Uterus (tissue), 4 donors: ENCODE measurements at regions of chr3 and their contacts with region 1.

Region 1: DNA sequence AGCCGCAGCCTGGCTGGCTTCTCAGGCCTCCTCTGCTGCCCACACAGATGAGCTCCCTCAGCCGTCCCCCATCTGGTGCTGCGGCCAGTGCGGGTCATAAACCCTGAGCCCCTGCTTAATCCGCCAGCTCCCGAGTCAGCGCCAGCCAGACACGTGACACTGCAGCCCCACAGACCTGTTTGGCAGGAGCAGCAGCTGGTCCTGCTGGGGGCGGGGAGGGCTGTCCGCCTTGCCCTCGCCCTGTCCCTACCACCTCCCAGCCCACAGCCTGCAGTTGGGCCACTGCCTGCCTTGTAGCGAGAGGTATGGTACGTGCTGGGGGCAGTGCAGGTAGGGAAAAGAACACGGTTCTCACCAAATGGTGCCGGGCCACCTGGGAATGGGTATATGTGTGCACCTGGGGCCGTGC is 86.2 kb downstream of the IQSEC1 start:
- DNase-seq: no peak
- H3K4me3 ChIP-seq: no peak overlapping the region
- H3K27ac ChIP-seq: no peak overlapping the region
- H3K4me1 ChIP-seq: no peaks in the 10 kb centered on the region
- H3K27me3 ChIP-seq: no peaks in the 10 kb centered on the region
- CTCF ChIP-seq: no peak
- POLR2A ChIP-seq: no peak

Region 2: DNA sequence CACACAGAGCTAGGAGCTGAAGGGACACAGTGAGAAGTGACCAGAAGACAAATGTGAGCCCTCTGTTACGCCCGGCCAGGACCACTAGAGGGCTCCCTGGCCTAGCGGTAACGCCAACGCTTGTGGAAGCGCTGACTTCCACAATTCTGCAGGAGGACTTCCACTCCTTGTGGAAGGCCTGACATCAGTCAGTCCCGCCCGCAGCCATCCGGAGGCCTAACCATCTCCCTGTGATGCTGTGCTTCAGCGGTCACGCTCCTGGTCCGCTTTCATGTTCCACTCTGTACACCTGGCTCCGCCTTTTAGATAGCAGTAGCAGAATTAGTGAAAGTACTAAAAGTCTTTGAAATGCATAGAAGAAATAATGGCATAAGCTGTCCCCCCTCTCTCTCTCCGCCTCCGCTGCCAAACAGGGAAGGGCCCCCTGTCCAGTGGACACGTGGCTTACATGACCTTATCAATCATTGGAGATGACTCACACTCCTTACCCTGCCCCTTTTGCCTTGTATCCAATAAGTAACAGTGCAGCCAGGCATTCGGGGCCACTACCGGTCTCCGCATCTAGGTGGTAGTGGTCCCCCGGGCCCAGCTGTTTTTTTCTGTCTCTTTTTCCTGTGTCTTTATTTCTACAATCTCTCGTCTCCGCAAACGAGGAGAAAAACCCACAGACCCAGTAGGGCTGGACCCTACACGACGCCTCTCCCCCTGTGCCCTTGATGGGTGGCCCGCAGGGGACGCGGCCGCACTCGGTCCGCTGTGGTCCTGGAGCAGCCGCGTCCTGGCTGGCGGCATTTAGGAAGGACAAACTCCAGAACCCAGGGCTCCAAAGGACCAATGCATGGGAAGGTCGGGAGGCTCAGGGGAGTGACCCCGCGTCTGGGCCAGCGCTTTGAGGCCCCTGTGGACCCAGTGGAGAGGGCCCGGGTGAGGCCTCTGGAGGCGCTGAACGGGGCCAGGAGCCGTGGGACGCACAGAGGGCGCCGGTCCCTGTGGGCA is 118.7 kb before region 1 on chr3:
- intact Hi-C with region 1: loop called (anchors 5 kb)
- DNase-seq: peak; percentile 77 to 82
- H3K4me3 ChIP-seq: no peak overlapping the region
- H3K27ac ChIP-seq: no peak overlapping the region
- H3K4me1 ChIP-seq: peaks cover 0 to 6% of the 10 kb centered on the region in 2 donors
- H3K27me3 ChIP-seq: no peaks in the 10 kb centered on the region
- CTCF ChIP-seq: peak; percentile 93 to 96 (median 95)
- POLR2A ChIP-seq: no peak

Region 3: GRCh38 chr3:13673209-13673608 is 686.2 kb after region 1 on chr3:
- intact Hi-C with region 1: no loop called
- DNase-seq: no peak
- H3K4me3 ChIP-seq: no peak overlapping the region
- H3K27ac ChIP-seq: no peak overlapping the region
- H3K4me1 ChIP-seq: no peaks in the 10 kb centered on the region
- H3K27me3 ChIP-seq: no peaks in the 10 kb centered on the region
- CTCF ChIP-seq: no peak
- POLR2A ChIP-seq: no peak